Endothelial cell of umbilical vein (primary cell): ENCODE measurements at regions of chr14 and their contacts with region 1.

Region 1: GRCh38 chr14:67571272-67571850 is 28.7 kb downstream of the PIGH start:
- DNase-seq: peak; percentile 54
- H3K4me3 ChIP-seq: no peak overlapping the region
- H3K27ac ChIP-seq: no peak overlapping the region
- H3K4me1 ChIP-seq: no peaks in the 10 kb centered on the region
- H3K27me3 ChIP-seq: peaks cover 0 to 5% of the 10 kb centered on the region in 2 experiments
- CTCF ChIP-seq: peak; percentile 89 to 93
- POLR2A ChIP-seq: no peak

Region 2: DNA sequence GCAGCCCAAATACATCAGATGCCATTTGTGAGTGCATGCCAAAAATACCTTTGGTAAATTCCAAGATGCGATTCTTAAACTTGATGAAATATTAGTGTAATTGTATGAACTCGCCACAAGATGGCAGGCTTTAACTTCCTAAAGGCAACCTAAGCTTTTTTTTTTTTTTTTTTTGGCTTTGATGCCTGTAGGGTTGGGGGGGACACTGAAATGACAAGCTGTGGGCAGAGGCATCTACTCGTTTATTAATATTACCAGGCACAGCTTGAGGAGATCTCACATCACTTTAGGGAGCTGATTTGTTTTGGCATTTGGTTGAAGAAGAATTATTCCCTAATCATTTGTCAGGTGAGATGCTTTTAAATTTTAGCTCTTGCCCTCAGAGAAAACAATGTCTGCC is 1211.9 kb before region 1 on chr14:
- CTCF ChIA-PET with region 1: interaction called, 21 read pairs
- POLR2A ChIA-PET with region 1: no interaction called
- dilution Hi-C with region 1: no loop called
- intact Hi-C with region 1: no loop called
- DNase-seq: peak; percentile 48
- H3K4me3 ChIP-seq: no peak overlapping the region
- H3K27ac ChIP-seq: no peak overlapping the region
- H3K4me1 ChIP-seq: no peaks in the 10 kb centered on the region
- H3K27me3 ChIP-seq: peaks cover 0 to 16% of the 10 kb centered on the region in 2 experiments
- CTCF ChIP-seq: peak; percentile 32 to 37
- POLR2A ChIP-seq: no peak

Region 3: DNA sequence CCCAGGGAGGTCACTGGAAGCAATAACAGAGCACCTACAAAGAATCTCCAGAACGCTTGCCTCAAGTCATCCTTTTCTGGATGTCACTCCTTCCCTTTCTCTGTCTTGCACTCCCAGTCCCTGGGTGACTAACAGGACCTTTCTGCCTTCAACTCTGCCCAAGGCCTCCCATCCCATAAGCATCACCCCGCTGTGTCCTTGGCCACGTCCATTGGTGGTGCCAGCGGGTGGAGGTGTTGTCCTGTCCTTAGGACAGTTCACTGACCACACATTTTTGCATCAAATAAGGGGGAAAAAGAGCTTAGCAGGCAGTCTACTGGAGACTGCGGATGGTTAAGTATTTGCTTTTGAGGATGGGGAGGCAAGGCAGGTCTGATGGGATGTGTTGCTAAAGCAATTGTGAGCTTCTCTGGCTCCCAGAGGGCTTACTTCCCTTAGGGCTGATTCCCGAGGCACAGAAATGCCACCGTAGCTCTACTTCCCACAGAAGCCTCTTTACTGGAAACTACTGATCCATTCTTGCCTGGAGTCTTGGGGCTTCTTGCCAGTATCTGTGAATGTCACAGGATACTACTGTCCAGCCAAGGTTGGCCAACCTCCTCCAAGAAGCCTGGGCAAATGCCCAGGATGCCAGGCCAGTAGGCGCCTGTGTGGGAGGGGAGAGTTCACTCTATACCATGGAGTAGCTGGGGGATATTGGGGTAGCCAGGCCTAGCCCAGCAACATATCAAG is 135.6 kb before region 1 on chr14:
- CTCF ChIA-PET with region 1: interaction called, 298 read pairs
- POLR2A ChIA-PET with region 1: no interaction called
- dilution Hi-C with region 1: no loop called
- intact Hi-C with region 1: no loop called
- DNase-seq: no peak
- H3K4me3 ChIP-seq: no peak overlapping the region
- H3K27ac ChIP-seq: no peak overlapping the region
- H3K4me1 ChIP-seq: no peaks in the 10 kb centered on the region
- H3K27me3 ChIP-seq: peaks cover 15 to 19% of the 10 kb centered on the region in 2 experiments
- CTCF ChIP-seq: no peak
- POLR2A ChIP-seq: no peak

Region 4: GRCh38 chr14:67526676-67527459 is 44.5 kb before region 1 on chr14:
- CTCF ChIA-PET with region 1: interaction called, 336 read pairs
- POLR2A ChIA-PET with region 1: interaction called, 6 read pairs
- dilution Hi-C with region 1: no loop called
- intact Hi-C with region 1: loop called (anchors 1 kb)
- DNase-seq: peak; percentile 62
- H3K4me3 ChIP-seq: no peak overlapping the region
- H3K27ac ChIP-seq: no peak overlapping the region
- H3K4me1 ChIP-seq: no peaks in the 10 kb centered on the region
- H3K27me3 ChIP-seq: peaks cover 29 to 36% of the 10 kb centered on the region in 2 experiments
- CTCF ChIP-seq: peak; percentile 56 to 70
- POLR2A ChIP-seq: no peak

Region 5: GRCh38 chr14:67541448-67542387 is 29.6 kb before region 1 on chr14:
- CTCF ChIA-PET with region 1: interaction called, 13 read pairs
- POLR2A ChIA-PET with region 1: no interaction called
- dilution Hi-C with region 1: no loop called
- intact Hi-C with region 1: no loop called
- DNase-seq: no peak
- H3K4me3 ChIP-seq: no peak overlapping the region
- H3K27ac ChIP-seq: no peak overlapping the region
- H3K4me1 ChIP-seq: peaks cover 6% of the 10 kb centered on the region
- H3K27me3 ChIP-seq: peaks cover 30 to 48% of the 10 kb centered on the region in 2 experiments
- CTCF ChIP-seq: no peak
- POLR2A ChIP-seq: no peak

Region 6: GRCh38 chr14:67583711-67584644 is 12.6 kb after region 1 on chr14:
- CTCF ChIA-PET with region 1: interaction called, 41 read pairs
- POLR2A ChIA-PET with region 1: no interaction called
- dilution Hi-C with region 1: no loop called
- intact Hi-C with region 1: no loop called
- DNase-seq: peak; percentile 53
- H3K4me3 ChIP-seq: no peak overlapping the region
- H3K27ac ChIP-seq: no peak overlapping the region
- H3K4me1 ChIP-seq: no peaks in the 10 kb centered on the region
- H3K27me3 ChIP-seq: peaks cover 0 to 2% of the 10 kb centered on the region in 2 experiments
- CTCF ChIP-seq: peak; percentile 56 to 76
- POLR2A ChIP-seq: no peak

Region 7: DNA sequence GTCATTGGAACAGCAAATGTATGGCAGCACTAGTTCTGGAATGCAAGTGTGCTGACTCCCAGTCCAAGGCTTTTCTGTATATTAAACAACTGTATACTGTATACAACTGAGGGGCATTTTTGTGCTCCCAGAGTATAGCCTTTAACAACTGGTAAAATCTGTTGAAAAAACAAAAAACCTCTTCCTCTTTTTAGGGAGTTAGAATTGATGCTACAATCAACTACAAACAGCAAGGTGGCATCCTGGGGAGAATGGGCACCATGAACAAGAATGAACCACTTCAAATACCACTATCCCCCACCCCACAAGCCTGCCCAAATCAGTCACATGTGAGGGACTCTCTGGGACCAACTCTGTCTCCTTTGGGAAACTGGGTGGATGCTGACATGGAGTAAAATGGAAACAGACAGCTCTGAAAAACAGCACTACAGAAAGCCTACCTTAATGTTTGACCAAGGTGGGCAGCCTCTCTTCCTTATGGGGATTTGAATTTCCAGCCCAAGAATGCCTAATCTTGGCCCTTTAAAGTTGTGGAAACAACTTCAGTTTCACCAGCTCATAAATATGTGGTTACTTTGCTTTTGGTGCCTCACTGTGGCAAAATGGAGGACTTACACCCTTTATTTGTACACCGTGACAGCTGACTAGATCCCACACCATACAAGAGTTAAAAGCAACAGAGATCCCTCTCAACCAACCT is 95.5 kb after region 1 on chr14:
- CTCF ChIA-PET with region 1: interaction called, 10 read pairs
- POLR2A ChIA-PET with region 1: no interaction called
- dilution Hi-C with region 1: no loop called
- intact Hi-C with region 1: no loop called
- DNase-seq: peak; percentile 78
- H3K4me3 ChIP-seq: no peak overlapping the region
- H3K27ac ChIP-seq: no peak overlapping the region
- H3K4me1 ChIP-seq: no peaks in the 10 kb centered on the region
- H3K27me3 ChIP-seq: no peaks in the 10 kb centered on the region
- CTCF ChIP-seq: peak; percentile 39 to 50
- POLR2A ChIP-seq: no peak